Motor neuron (in vitro differentiated cells): ENCODE measurements at regions of chr17 and their contacts with region 1.

Region 1: GRCh38 chr17:20992987-20993862 is 49.6 kb downstream of the USP22 start:
- ATAC-seq: peak; percentile 60 to 85 (median 70)
- H3K4me3 ChIP-seq: no peak overlapping the region
- H3K27ac ChIP-seq: peak overlapping the region; percentile 85 to 87
- H3K4me1 ChIP-seq: peaks cover 5 to 12% of the 10 kb centered on the region in 2 donors

Region 2: DNA sequence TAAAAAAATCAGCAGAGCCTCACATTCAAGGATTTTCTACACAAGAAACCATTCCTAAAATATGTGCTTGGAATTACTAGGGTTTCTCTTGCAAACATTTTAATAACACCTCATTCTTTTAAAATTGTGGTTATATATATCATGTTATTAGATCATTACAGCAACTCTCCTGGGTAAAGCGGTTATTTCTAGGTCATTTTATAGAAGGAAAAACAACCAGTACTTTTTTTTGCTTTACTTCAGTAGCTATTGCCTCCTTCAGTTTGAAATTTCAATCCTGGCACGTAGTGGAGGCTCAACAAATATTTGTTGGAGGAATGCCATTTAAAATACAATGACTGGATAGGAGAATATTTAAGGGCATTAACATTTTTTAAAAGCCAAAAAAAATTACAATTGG is 193.1 kb before region 1 on chr17:
- in situ Hi-C with region 1: loop called in 1 of 9 experiments (anchors 10 kb)
- ATAC-seq: no peak
- H3K4me3 ChIP-seq: no peak overlapping the region
- H3K27ac ChIP-seq: no peak overlapping the region
- H3K4me1 ChIP-seq: no peaks in the 10 kb centered on the region

Region 3: GRCh38 chr17:20896153-20896649 is 97.0 kb before region 1 on chr17:
- in situ Hi-C with region 1: no loop called
- ATAC-seq: no peak
- H3K4me3 ChIP-seq: no peak overlapping the region
- H3K27ac ChIP-seq: no peak overlapping the region
- H3K4me1 ChIP-seq: no peaks in the 10 kb centered on the region

Region 4: GRCh38 chr17:20908373-20909273 is 84.6 kb before region 1 on chr17:
- in situ Hi-C with region 1: no loop called
- ATAC-seq: peak; percentile 97 to 99 (median 98)
- H3K4me3 ChIP-seq: peak overlapping the region; percentile 10 to 30 (median 16)
- H3K27ac ChIP-seq: peak overlapping the region; percentile 55 to 71
- H3K4me1 ChIP-seq: peaks cover 7 to 13% of the 10 kb centered on the region in 2 donors